ENCODE measurements at regions of chr16 and their contacts with region 1.

Region 1: DNA sequence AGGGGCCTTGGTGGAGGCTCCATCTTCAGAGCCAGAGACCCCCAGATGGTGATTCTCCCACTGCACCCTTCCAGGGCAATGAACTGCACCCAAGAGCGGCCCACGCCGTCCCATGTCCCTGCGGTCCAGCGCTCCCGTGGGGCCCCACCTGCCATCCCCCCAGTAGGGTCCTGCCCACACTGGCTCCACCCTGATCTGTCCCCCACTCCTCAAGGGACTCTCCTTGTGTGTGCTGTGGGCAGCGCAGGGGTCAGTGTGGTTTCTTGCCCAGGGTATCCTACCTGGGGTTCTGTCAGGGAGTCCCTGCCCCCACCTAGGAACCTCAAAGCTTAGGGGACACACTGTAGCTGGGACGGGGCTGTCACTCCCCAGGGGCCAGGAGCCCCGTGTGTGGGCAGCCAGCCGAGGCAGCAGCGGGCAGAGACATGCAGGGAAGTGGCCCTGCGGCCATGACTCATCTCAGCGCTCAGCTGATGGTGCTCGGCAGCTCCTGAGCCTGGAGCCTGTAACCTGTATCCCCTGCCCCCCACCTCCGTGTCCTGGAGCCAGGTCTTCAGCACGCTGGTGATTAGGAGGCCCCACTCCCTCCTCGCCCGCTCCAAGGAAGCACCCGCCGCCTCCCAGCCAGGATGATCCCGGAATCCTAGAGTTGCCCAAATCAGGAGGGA is 35.7 kb upstream of the SSTR5 start:
- DNase-seq: no peak
- ATAC-seq: peak in 1 of 4 donors; percentile 33
- H3K4me3 ChIP-seq: no peak overlapping the region
- H3K27ac ChIP-seq: no peak overlapping the region
- H3K4me1 ChIP-seq: no peaks in the 10 kb centered on the region
- H3K27me3 ChIP-seq: peaks cover 0 to 61% (median 19%) of the 10 kb centered on the region in 3 donors
- CTCF ChIP-seq: no peak

Region 2: GRCh38 chr16:760545-761343 is 276.1 kb before region 1 on chr16 and contains the start of gene MSLN:
- intact Hi-C with region 1: no loop called
- DNase-seq: no peak
- ATAC-seq: no peak
- H3K4me3 ChIP-seq: no peak within 1 kb of the TSS
- H3K27ac ChIP-seq: no peak within 1 kb of the TSS
- H3K4me1 ChIP-seq: no peaks in the 10 kb centered on the region
- H3K27me3 ChIP-seq: peaks cover 0 to 50% (median 12%) of the 10 kb centered on the region in 3 donors
- CTCF ChIP-seq: no peak
- total RNA-seq, gene MSLN: 0.17 TPM in 1 of 4 donors, not detected in the others

Region 3: GRCh38 chr16:886843-887731 is 149.8 kb before region 1 on chr16:
- intact Hi-C with region 1: no loop called
- DNase-seq: peak; percentile 9 to 42
- ATAC-seq: no peak
- H3K4me3 ChIP-seq: no peak overlapping the region
- H3K27ac ChIP-seq: no peak overlapping the region
- H3K4me1 ChIP-seq: no peaks in the 10 kb centered on the region
- H3K27me3 ChIP-seq: no peaks in the 10 kb centered on the region
- CTCF ChIP-seq: no peak

Region 4: DNA sequence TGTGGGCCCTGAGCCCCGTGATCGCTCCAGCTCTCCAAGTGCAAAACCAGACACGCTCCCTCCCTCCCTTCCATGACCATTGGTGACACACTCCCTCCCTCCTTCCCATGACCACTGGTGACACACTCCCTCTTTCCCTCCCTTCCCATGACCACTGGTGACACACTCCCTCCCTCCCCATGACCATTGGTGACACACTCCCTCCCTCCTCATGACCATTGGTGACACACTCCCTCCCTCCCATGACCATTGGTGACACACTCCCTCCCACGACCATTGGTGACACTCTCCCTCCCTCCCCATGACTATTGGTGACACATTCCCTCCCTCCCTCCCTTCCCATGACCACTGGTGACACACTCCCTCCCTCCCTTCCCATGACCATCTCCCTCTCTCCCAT is 122.4 kb before region 1 on chr16:
- intact Hi-C with region 1: loop called in 1 of 2 experiments (anchors 10 kb)
- DNase-seq: no peak
- ATAC-seq: peak in 2 of 4 donors; percentile 23 to 40
- H3K4me3 ChIP-seq: no peak overlapping the region
- H3K27ac ChIP-seq: no peak overlapping the region
- H3K4me1 ChIP-seq: no peaks in the 10 kb centered on the region
- H3K27me3 ChIP-seq: no peaks in the 10 kb centered on the region
- CTCF ChIP-seq: no peak

Measured in psoas muscle (tissue), 8 donors.